ENCODE measurements at regions of chr9 and their contacts with region 1.

Region 1: DNA sequence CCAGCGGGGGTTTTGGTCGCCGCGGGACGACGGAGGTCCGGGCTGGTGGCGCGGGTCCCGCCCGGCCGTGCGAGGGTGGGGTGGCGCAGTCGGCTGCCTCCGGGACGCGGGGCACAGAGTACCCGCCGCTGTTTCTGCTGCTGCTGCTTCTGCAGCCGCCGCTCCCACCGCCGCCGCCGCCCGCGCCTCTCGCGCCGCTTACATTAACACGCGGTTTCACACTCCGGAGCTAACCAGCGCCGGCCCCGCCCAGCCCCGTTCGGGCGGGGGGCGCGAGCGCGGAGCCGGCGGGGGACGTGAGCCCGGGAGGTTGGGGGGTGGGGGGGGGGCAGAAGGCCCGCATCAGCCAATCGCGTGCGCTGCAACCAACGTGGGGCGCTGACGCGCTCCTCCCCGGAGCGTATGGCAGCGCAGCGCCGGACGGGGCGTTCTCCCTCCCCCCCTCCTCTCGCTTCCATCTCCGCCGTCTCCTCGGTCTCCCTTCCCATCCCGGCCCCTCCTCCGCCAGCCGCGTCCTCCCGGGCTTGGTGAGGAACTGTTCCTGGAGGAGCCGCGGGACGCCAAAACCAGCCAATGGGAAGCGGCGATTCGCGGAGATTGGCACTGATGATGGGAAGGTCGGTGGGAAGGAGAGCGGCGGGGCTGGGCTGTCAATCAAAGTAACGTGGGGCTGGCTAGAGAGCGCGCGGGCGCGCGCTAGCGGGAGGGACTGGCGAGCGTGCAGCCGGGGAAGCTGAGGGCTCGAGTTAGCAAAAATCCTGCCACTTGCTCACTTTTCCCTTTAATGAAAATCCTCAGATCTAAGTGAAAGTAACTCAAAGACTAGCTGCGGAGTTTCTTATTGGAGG is at the start of gene TLE1:
- DNase-seq: peak; percentile 97
- ATAC-seq: peak; percentile 69
- H3K4me3 ChIP-seq: peak within 1 kb of the TSS; percentile 81
- H3K27ac ChIP-seq: peak within 1 kb of the TSS; percentile 81
- H3K4me1 ChIP-seq: peaks cover 24% of the 10 kb centered on the region
- H3K27me3 ChIP-seq: no peaks in the 10 kb centered on the region
- CTCF ChIP-seq: no peak
- total RNA-seq, gene TLE1: 49.0 and 55.6 TPM in 2 replicates

Region 2: GRCh38 chr9:80664327-80665200 is 1025.0 kb before region 1 on chr9:
- CTCF ChIA-PET with region 1: no interaction called
- POLR2A ChIA-PET with region 1: no interaction called
- intact Hi-C with region 1: loop called (anchors 5 kb)
- DNase-seq: peak; percentile 75
- ATAC-seq: peak; percentile 94
- H3K4me3 ChIP-seq: no peak overlapping the region
- H3K27ac ChIP-seq: no peak overlapping the region
- H3K4me1 ChIP-seq: peaks cover 11% of the 10 kb centered on the region
- H3K27me3 ChIP-seq: no peaks in the 10 kb centered on the region
- CTCF ChIP-seq: peak; percentile 57

Region 3: DNA sequence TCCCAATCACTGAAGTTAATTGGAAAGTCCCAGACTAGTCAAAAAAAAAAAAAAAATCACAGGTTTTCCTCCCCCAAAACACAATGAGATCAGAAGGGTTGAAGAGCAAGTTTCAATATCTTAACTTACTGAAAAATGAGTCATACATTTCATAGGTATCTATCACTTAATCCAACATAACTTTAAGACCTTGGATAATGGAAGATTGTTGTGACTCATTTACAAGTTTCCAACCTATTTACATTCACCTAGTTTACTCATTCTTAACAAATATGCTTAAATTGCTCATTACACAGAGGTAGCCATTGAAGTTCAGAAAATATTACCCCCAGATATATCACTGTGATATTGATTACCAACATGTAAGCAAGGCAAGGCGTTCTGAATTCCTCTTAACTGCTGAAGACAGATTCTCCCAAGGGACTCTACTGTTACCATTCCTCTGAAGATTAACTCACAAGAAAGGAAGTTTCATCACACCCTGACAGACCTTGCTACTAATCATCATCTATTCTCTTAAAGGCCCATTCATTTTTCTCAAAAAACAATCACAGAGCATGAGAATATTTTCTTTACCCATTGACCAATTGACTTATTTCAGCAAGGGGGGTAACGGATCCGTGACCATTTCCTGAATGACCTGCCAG is 564.0 kb before region 1 on chr9:
- CTCF ChIA-PET with region 1: no interaction called
- POLR2A ChIA-PET with region 1: no interaction called
- intact Hi-C with region 1: loop called (anchors 5 kb)
- DNase-seq: peak; percentile 87
- ATAC-seq: peak; percentile 94
- H3K4me3 ChIP-seq: peak overlapping the region; percentile 9; the same call in 1 of the 2 replicates
- H3K27ac ChIP-seq: peak overlapping the region; percentile 90
- H3K4me1 ChIP-seq: peaks cover 24% of the 10 kb centered on the region
- H3K27me3 ChIP-seq: no peaks in the 10 kb centered on the region
- CTCF ChIP-seq: no peak

Region 4: DNA sequence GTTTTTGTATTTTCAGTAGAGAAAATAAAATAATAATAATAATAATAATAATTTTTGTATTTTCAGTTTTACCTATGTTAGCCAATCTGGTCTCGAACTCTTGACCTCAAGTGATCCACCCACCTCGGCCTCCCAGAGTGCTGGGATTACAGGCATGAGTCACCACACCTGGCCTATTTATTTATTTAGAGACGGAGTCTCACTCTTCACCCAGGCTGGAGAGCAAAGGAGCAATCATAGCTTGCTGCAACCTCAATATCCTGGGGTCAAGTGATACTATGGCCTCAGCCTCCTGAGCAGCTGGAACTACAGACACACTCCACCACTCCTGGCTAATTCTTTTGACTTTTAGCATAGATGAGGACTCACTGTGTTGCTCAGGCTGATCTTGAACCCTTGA is 167.7 kb before region 1 on chr9:
- CTCF ChIA-PET with region 1: interaction called, 6 read pairs
- POLR2A ChIA-PET with region 1: no interaction called
- intact Hi-C with region 1: loop called (anchors 2 kb)
- DNase-seq: peak; percentile 17
- ATAC-seq: no peak
- H3K4me3 ChIP-seq: no peak overlapping the region
- H3K27ac ChIP-seq: no peak overlapping the region
- H3K4me1 ChIP-seq: peaks cover 11% of the 10 kb centered on the region; the same call in 1 of the 2 replicates
- H3K27me3 ChIP-seq: no peaks in the 10 kb centered on the region
- CTCF ChIP-seq: no peak

Region 5: DNA sequence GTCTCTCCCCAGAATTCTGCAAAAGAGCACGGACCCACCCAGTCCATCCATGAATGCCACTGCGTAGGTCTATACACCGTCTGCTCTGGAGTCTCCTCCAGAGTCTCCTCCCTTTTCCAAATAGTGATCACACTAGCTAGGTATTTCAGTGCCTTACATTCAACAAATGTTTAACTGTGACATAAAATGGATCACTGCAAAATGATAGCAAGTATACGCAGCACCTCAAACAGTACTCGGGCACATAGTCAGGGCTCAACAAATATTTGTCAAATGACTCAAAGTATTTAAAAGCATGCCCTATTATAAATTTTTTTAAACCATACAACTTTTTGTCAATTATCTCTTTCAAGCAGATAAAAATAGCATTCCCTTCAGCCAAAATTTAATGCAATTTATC is 60.7 kb before region 1 on chr9:
- CTCF ChIA-PET with region 1: no interaction called
- POLR2A ChIA-PET with region 1: no interaction called
- intact Hi-C with region 1: loop called (anchors 1 kb)
- DNase-seq: peak; percentile 93
- ATAC-seq: peak; percentile 86
- H3K4me3 ChIP-seq: peak overlapping the region; percentile 9; the same call in 1 of the 2 replicates
- H3K27ac ChIP-seq: peak overlapping the region; percentile 91
- H3K4me1 ChIP-seq: peaks cover 56% of the 10 kb centered on the region
- H3K27me3 ChIP-seq: no peaks in the 10 kb centered on the region
- CTCF ChIP-seq: no peak

Region 6: DNA sequence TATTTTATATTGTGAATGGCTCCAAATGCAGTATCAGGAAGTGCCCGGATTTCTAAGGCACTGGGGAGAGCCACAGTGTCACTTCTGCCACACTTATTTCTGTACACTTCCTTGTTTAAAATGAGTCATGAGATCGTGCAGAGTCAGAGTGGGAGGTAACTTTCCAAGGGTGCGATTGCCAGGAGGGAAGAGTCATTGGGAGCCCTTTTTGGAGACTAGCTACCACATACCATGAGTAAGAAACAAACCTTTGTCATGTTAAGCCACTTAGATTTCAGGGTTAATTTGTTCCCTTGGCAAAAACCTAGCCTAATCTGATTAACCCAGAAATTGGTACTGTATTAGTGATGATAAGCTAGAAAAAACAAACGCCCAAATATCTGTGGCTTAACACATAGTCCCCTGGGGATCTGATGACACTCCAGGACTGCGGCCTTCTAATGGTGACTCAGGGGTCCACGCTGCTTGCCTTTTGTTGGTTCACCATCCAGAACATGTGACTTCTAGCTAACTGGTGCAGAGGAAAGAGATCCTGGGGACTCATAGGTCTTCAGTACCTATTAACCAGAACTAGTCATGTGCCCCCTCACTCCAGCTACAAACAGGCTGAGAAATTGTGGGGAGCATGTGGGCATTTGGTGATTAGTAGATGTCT is 48.4 kb after region 1 on chr9:
- CTCF ChIA-PET with region 1: interaction called, 3 read pairs
- POLR2A ChIA-PET with region 1: no interaction called
- intact Hi-C with region 1: loop called (anchors 10 kb)
- DNase-seq: peak; percentile 89
- ATAC-seq: peak; percentile 95
- H3K4me3 ChIP-seq: no peak overlapping the region
- H3K27ac ChIP-seq: peak overlapping the region; percentile 93
- H3K4me1 ChIP-seq: peaks cover 29% of the 10 kb centered on the region
- H3K27me3 ChIP-seq: no peaks in the 10 kb centered on the region
- CTCF ChIP-seq: no peak

Measured in PC-3 (cell line).